Left ventricle myocardium superior (tissue), 1 donor: ENCODE measurements at regions of chr11 and their contacts with region 1.

Region 1: GRCh38 chr11:125091247-125091876 is 20.1 kb downstream of the TMEM218 start:
- DNase-seq: no peak
- ATAC-seq: peak; percentile 91

Region 2: DNA sequence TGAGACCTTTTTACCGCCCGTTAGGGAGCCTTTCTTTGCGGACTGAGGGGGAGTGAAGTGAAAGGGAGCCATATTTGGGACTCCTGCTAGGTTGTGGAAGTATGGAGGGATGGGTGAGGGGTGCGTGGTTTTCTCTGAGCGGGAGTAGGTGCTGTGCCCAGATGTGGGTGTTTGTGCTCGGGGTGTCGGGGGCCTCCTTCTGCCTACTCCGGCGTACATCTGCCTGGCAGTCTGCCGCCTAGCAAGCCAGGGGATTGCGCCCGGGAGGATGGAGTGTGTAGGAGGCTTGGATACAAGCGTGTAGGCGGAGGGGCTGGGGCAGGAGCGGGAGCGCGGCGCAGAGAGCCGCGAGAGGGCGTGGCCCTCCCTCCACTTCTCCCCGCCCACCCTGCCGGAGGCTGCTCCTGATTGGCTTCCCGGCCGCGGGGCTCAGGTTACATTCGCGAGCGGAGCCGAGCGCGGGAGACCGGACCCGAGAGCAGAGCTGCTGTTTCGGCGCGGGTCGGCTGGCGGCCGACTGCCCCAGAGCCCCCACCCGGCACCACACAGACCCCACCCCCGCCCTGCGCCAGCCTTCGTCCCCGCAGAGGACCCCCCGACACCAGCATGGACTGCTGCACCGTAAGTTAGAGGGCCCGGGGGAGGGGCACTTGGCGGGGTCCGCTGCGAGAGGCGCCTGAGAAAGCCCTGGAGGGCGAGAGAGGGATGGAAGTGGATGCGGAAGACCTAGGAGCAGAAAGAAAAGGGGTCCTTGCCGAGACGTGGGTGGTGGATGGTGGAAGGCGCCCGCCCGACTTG is 351.7 kb before region 1 on chr11 and contains the start of gene NRGN:
- intact Hi-C with region 1: no loop called
- DNase-seq: peak; percentile 96
- ATAC-seq: peak; percentile 99
- total RNA-seq, gene NRGN: 4.1 TPM

Region 3: DNA sequence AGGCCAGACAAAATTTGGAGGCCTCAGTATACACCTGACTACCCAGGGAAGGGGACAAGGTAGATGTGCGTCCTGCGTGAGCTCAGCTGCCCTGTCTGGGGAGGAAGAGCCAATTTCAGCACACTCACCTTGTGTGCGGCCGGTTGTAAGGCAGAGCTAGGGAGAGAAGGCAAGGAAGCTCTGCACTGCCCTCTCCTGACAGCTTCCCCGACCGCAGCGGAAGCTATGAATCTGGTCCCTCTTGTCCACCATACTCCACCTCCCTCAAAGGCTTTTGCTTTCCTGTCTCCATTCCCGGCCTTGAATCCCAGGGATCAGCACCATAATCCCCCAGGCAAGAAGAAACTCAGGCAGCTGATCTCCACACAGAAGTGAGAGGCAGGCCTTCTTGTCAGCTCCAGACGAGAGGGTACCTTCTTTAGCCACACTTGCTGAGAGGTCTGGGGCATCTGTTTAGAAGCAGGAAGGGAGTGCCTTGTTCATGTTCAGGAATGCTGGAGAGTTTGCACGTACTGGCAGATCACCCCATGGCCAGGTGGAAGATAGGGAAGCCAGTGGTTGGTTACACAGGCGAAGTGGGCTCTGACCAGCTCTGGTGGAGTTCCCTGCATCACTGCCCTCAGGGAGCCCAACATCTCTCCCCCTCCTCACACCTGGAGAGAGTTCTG is 342.2 kb after region 1 on chr11:
- intact Hi-C with region 1: loop called (anchors 5 kb)
- DNase-seq: peak; percentile 68
- ATAC-seq: peak; percentile 82